GM10248 (cell line): ENCODE measurements at regions of chr6 and their contacts with region 1.

Region 1: DNA sequence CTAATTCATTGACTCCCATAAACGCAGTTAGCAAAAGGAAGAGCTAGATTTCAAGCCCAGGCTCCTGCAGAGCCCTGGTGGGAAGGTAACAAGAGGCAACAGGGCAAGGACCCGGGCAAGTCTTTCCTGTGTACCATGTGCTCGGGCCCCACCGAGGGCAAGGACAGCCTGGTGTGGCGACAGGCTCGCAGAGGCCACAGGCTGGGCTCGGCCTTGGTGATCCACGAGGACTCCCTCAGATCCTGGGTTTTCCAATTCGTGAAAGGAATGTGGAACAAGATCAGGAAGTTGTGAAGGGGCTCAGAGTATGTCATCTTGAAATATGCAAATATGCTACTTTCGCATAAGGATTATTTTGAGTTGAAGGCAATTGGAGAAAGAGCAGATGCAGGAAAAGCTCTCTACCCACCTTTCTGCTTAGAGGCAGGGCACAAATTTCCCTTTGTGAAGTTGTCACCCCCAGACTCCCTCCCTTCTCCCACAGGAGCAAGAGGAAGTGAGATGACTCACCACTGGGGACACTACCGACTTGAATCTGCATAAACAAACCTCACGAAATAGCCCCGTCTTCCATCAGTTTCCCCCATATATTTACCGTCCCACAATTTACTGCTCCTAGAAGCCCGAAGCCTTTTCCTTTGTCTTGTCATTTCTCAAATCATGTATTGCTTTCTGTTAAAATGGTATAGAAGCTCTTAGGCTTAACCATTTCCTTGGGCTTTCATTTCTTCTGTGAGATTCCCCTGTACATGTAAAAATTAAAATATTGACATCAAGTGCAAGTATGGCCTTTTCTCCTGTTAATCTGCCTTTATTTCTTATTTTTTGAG is 79.0 kb downstream of the PSMG4 start:
- DNase-seq: peak; percentile 52
- CTCF ChIP-seq: peak; percentile 1

Region 2: GRCh38 chr6:3323696-3324261 is 14.0 kb before region 1 on chr6:
- CTCF ChIA-PET with region 1: interaction called, 17 read pairs
- POLR2A ChIA-PET with region 1: no interaction called
- DNase-seq: no peak
- CTCF ChIP-seq: no peak

Region 3: GRCh38 chr6:3627956-3628835 is 290.5 kb after region 1 on chr6:
- CTCF ChIA-PET with region 1: no interaction called
- POLR2A ChIA-PET with region 1: no interaction called
- DNase-seq: no peak
- CTCF ChIP-seq: no peak